H1 (cell line): ENCODE measurements at regions of chr15 and their contacts with region 1.

Region 1: GRCh38 chr15:78618490-78618934 is 2.3 kb downstream of the CHRNA3 start:
- DNase-seq: peak; percentile 72 to 98
- H3K4me3 ChIP-seq: no peak overlapping the region
- H3K27ac ChIP-seq: no peak overlapping the region
- H3K4me1 ChIP-seq: peaks cover 0 to 10% (median 2%) of the 10 kb centered on the region in 4 experiments; a peak in 6 of 7 replicates
- H3K27me3 ChIP-seq: peaks cover 6 to 39% (median 35%) of the 10 kb centered on the region in 4 experiments
- CTCF ChIP-seq: peak; percentile 60 to 92 (median 82)
- EP300 ChIP-seq: no peak
- POLR2A ChIP-seq: no peak
- RAD21 ChIP-seq: peak; percentile 89 to 92

Region 2: GRCh38 chr15:78396976-78397375 is 221.5 kb before region 1 on chr15:
- CTCF ChIA-PET with region 1: no interaction called
- POLR2A ChIA-PET with region 1: no interaction called
- DNase-seq: peak in 1 of 2 experiments; percentile 71
- H3K4me3 ChIP-seq: no peak overlapping the region
- H3K27ac ChIP-seq: no peak overlapping the region
- H3K4me1 ChIP-seq: peaks cover 4 to 31% (median 10%) of the 10 kb centered on the region in 4 experiments
- H3K27me3 ChIP-seq: peaks cover 0 to 2% (median 0%) of the 10 kb centered on the region in 4 experiments; a peak in 2 of 7 replicates
- CTCF ChIP-seq: peak; percentile 63 to 75 (median 66)
- EP300 ChIP-seq: no peak
- POLR2A ChIP-seq: no peak
- RAD21 ChIP-seq: peak; percentile 32 to 63

Region 3: DNA sequence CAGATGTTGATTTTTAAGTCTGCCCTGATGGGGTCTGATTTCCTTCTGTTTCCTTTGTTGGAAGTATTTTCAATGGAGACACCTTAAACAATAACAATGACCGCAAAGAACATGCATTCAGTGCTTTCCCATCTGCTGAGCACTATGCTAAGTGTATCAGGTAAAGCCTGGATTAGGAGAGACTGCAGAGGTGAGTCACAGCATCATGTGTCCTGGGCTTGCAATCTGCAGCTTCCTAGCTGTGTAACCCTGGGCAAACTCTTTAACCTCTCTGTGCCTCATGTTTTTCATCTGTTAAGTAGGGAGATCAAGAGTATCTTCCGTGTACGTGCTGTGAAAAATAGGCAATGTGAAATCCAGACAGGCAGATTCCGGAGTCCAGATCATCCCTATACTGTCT is 35.8 kb after region 1 on chr15:
- CTCF ChIA-PET with region 1: interaction called, 10 read pairs
- POLR2A ChIA-PET with region 1: no interaction called
- DNase-seq: no peak
- H3K4me3 ChIP-seq: no peak overlapping the region
- H3K27ac ChIP-seq: no peak overlapping the region
- H3K4me1 ChIP-seq: no peaks in the 10 kb centered on the region
- H3K27me3 ChIP-seq: no peaks in the 10 kb centered on the region
- CTCF ChIP-seq: no peak
- EP300 ChIP-seq: no peak
- POLR2A ChIP-seq: no peak
- RAD21 ChIP-seq: no peak

Region 4: DNA sequence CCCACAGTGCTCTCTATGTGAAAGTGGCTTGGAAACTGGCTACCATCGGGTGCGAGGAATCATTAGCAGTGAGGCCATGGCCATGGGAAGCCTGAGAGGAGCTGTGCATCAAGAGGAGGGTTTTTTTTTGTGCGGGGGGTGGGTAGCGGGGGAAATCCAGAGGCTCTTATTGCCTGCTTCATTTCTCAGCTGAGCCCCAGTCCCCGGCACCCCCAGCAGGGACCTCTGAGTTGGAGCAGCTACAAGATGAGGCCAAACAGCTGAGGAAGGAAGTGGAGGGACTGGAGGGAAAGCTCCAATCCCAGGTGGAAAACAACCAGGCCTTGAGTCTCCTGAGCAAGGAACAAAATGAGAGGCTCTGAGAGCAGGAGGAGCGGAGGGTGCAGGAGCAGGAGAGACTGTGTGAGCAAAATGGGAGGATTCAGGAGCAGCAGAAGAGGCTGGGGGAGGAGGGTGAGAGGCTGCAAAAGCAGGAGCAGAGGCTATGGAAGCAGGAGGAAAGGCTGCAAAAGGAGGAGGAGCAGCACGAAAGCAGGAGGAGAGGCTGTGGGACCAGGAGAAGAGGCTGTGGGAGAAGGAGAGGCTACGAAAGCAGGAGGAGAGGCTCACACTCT is 116.0 kb after region 1 on chr15:
- CTCF ChIA-PET with region 1: interaction called, 12 read pairs
- POLR2A ChIA-PET with region 1: no interaction called
- DNase-seq: no peak
- H3K4me3 ChIP-seq: no peak overlapping the region
- H3K27ac ChIP-seq: no peak overlapping the region
- H3K4me1 ChIP-seq: no peaks in the 10 kb centered on the region; a peak in 1 of 7 replicates
- H3K27me3 ChIP-seq: no peaks in the 10 kb centered on the region; a peak in 1 of 7 replicates
- CTCF ChIP-seq: no peak
- EP300 ChIP-seq: no peak
- POLR2A ChIP-seq: no peak
- RAD21 ChIP-seq: no peak

Region 5: DNA sequence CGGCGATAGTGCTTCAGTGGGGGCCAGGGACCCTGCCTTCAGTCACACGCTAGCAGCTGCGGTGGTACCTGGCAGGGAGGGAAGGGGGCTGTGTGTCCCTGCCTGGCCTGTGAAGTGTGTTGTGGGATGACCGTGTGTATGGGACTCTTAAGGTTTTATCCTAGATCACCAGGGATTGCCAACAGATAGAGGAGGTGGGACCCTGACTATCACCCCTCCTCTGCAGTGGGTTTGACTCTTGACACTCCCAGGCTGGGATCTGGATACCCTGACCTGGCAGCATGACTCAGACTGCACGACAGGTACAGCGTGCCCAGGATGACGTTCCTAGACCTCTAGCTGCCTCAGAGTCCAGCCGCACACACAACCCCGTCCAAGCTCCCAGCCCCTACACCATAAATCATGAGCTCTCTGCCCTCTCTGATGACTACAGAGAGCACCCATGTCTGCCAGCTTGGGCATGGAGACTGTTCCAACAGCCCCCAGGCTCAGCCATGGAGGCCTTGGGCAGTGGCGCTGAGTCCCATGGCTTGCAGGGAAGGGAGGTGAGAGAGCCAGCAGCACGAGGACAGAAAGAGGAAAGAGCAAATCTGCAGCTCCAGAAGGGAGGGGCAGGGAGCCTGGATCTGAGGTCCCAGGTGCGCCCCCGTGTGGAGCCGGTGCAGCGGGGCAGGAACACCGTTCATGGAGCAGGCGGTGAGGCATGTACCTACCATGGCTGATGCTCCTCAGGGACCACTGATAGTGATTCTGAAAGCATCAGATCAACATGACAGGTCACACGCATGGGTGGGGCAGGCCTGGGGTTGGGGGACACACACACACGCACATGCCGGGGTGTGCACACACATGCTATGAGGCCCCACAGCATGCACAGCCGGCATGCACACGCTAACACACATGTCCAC is 121.7 kb after region 1 on chr15:
- CTCF ChIA-PET with region 1: interaction called, 15 read pairs
- POLR2A ChIA-PET with region 1: no interaction called
- DNase-seq: peak in 1 of 2 experiments; percentile 96
- H3K4me3 ChIP-seq: no peak overlapping the region
- H3K27ac ChIP-seq: no peak overlapping the region
- H3K4me1 ChIP-seq: peaks cover 0 to 7% (median 3%) of the 10 kb centered on the region in 4 experiments; a peak in 4 of 7 replicates
- H3K27me3 ChIP-seq: no peaks in the 10 kb centered on the region
- CTCF ChIP-seq: peak; percentile 76 to 88 (median 79)
- EP300 ChIP-seq: no peak
- POLR2A ChIP-seq: no peak
- RAD21 ChIP-seq: peak; percentile 49 to 53